ENCODE measurements at regions of chr10 and their contacts with region 1.

Region 1: GRCh38 chr10:2631557-2632071 is 435.7 kb upstream of the PFKP start:
- DNase-seq: no peak
- H3K4me3 ChIP-seq: no peak overlapping the region
- H3K27ac ChIP-seq: no peak overlapping the region
- H3K4me1 ChIP-seq: no peaks in the 10 kb centered on the region
- H3K27me3 ChIP-seq: peaks cover 0 to 14% of the 10 kb centered on the region in 2 donors
- CTCF ChIP-seq: no peak
- POLR2A ChIP-seq: no peak

Region 2: DNA sequence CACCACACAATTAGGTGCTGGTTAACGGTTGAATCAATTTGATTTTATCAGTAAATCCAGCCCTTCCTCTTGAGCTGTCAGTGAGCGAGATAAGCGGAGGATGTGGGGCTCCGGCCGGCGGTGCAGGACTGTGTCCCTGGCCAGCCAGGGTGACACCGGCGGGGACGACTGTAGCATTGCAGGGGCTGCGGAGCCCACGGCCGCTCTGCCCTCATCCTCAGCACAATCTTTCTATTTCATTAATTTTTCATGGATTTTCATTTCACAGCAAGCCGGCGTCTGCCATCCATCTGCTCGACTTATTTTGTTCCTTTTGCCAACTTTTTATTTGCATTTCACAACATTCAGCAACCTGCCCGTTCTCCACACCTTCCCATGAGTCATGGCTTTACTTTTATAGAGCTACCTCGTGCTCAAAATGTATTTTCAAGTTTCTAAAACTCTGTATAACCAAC is 899.0 kb before region 1 on chr10:
- intact Hi-C with region 1: no loop called
- DNase-seq: no peak
- H3K4me3 ChIP-seq: no peak overlapping the region
- H3K27ac ChIP-seq: no peak overlapping the region
- H3K4me1 ChIP-seq: peaks cover 0 to 4% of the 10 kb centered on the region in 2 donors
- H3K27me3 ChIP-seq: peaks cover 0 to 81% of the 10 kb centered on the region in 2 donors
- CTCF ChIP-seq: no peak
- POLR2A ChIP-seq: no peak

Region 3: DNA sequence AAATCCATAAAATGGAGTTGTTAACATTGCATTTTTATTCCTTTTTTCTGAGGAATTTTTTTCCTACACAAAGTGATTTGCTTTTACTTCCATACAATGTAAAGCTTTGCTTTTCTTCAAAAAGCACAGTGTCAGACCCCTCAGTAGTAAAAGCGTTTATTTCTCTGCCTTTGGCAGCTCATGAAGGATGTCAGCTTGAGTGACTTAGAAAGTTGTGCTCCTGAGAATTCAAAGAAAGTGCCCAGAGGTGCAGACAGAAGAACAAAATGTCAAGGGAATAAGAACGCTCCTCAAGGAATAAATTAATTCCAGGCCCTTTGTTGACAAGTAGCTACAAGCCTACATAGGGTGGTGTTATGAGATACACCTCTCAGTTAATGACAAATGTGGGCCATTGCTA is 525.0 kb before region 1 on chr10:
- intact Hi-C with region 1: no loop called
- DNase-seq: no peak
- H3K4me3 ChIP-seq: no peak overlapping the region
- H3K27ac ChIP-seq: no peak overlapping the region
- H3K4me1 ChIP-seq: no peaks in the 10 kb centered on the region
- H3K27me3 ChIP-seq: no peaks in the 10 kb centered on the region
- CTCF ChIP-seq: no peak
- POLR2A ChIP-seq: no peak

Region 4: DNA sequence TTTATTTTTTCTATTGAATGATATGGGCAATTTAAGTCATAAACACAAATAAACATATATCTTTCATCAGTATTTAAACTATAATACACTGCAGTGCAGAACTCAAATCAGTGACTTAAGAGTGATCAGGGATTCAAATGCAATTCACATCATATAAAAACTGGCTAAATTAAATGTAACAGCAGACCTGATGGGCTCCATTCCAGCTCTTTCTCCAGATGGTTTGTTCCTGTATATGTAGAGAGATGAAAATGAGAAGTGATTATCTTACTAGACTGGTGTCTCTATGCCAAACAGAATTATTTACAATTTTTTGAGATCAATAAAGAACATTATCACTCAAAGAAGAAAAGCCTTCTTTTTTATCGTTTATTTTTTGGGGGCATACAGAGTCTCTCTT is 325.5 kb before region 1 on chr10:
- intact Hi-C with region 1: loop called (anchors 5 kb)
- DNase-seq: no peak
- H3K4me3 ChIP-seq: no peak overlapping the region
- H3K27ac ChIP-seq: no peak overlapping the region
- H3K4me1 ChIP-seq: no peaks in the 10 kb centered on the region
- H3K27me3 ChIP-seq: no peaks in the 10 kb centered on the region
- CTCF ChIP-seq: no peak
- POLR2A ChIP-seq: no peak

Region 5: GRCh38 chr10:2782265-2782664 is 150.7 kb after region 1 on chr10:
- intact Hi-C with region 1: no loop called
- DNase-seq: no peak
- H3K4me3 ChIP-seq: no peak overlapping the region
- H3K27ac ChIP-seq: no peak overlapping the region
- H3K4me1 ChIP-seq: no peaks in the 10 kb centered on the region
- H3K27me3 ChIP-seq: peaks cover 0 to 21% of the 10 kb centered on the region in 2 donors
- CTCF ChIP-seq: no peak
- POLR2A ChIP-seq: no peak

Measured in breast epithelium (tissue), 4 donors.